Activated CD4-positive, alpha-beta T cell treated with anti-CD3 and anti-CD28 coated beads for 36 hours (primary cell): ENCODE measurements at regions of chr2 and their contacts with region 1.

Region 1: DNA sequence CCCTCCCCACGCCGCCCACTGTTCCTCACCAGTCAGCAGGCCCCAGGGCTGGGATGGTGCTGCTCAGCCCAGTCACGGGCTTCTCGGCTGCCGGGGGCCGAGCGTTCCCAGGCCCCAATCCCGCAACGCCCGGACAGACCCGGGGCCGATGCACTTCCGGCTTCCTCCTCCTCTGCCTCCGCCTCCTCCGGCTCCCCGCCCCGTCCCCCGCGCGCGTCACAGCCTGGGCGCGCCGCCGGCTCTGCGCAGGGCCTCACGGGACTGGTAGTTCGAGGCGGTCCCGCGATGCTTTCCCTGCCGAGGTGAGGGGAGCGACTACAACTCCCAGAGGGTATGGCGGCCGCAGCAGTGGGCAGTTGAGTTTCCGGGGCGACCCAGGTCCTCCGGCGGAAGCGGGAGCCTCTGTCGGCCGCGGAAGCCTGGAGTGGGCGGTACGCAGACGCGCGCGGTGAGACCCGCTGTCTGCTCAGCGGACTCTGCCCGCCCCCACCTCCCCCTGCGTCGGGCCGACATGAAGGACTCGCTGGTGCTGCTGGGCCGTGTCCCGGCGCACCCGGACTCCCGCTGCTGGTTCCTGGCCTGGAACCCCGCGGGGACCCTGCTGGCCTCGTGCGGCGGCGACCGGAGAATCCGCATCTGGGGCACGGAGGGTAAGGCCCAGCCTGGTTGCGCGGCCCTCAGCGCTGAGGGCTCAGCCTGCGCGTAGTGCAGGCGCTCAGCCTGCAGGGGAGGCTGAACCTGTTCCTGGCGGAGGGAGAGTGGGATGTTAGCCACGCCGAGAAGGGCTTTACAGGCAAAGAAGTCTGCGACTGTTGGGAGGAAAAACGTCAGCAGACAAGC is at the starts of genes CIAO1 and TMEM127:
- DNase-seq: peak; percentile 99
- ATAC-seq: peak; percentile 94
- H3K4me3 Mint-ChIP-seq: peak within 1 kb of the TSS; percentile 99
- H3K27ac Mint-ChIP-seq: peak within 1 kb of the TSS; percentile 99
- H3K4me1 Mint-ChIP-seq: peaks cover 57% of the 10 kb centered on the region
- H3K27me3 Mint-ChIP-seq: no peaks in the 10 kb centered on the region
- total RNA-seq, gene CIAO1: 72.1 to 77.6 TPM
- total RNA-seq, gene TMEM127: 16.6 to 17.9 TPM

Region 2: GRCh38 chr2:96116879-96117697 is 149.0 kb before region 1 on chr2:
- CTCF ChIA-PET with region 1: no interaction called
- POLR2A ChIA-PET with region 1: no interaction called
- intact Hi-C with region 1: loop called (anchors 1 to 5 kb)
- DNase-seq: peak; percentile 80
- ATAC-seq: peak; percentile 87
- H3K4me3 Mint-ChIP-seq: peak overlapping the region; percentile 55
- H3K27ac Mint-ChIP-seq: no peak overlapping the region
- H3K4me1 Mint-ChIP-seq: peaks cover 10% of the 10 kb centered on the region
- H3K27me3 Mint-ChIP-seq: peaks cover 36% of the 10 kb centered on the region

Region 3: DNA sequence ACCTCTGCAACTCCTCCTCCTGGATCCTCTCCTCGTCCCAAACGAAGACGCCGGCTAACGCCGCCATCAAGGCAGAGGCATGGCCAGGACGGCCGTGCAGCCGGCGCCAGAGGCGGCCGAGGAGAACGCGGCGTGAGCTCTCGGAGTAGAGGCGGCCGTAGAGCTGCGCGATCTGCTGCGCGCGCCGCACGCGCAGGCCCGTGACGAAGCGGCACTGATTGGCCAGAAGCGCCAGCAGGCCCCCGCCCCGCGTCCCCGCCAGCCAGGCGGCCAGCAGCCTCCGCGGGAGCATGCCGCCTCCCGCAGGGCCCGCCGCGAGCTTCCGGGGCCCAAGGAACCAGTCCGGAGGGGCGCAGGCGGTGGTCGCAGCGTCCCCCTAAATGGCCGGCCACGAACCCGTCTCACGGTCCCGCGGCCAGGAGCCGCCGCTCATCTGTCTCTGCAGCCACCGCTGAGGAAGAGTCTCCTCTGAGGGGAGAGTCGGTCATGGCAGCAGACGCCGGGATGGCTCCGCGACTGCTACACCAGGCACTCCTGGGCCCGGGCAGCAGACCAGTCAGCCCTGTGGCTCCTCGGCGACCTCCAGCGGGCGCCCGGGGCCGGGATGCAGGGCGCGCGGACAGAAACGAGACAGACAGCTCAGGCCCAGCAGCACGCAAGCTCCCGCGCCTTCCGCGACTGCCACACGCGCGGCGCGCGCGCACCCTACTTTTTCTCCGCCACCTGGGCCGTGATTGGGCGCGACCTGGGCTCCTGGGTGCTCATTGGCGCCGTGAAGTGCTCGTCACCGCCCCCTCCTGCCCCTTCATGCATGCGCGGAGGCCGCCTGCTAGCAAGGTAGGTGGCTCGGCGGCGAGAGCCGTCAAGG is 57.7 kb before region 1 on chr2 and contains the start of gene STARD7:
- CTCF ChIA-PET with region 1: interaction called, 8 read pairs
- POLR2A ChIA-PET with region 1: interaction called, 3 read pairs
- intact Hi-C with region 1: loop called (anchors 1 kb)
- DNase-seq: peak; percentile 99
- ATAC-seq: peak; percentile 94
- H3K4me3 Mint-ChIP-seq: peak within 1 kb of the TSS; percentile 100
- H3K27ac Mint-ChIP-seq: peak within 1 kb of the TSS; percentile 96
- H3K4me1 Mint-ChIP-seq: peaks cover 45% of the 10 kb centered on the region
- H3K27me3 Mint-ChIP-seq: no peaks in the 10 kb centered on the region
- total RNA-seq, gene STARD7: 151 to 173 TPM

Region 4: GRCh38 chr2:96233880-96234316 is 32.2 kb before region 1 on chr2:
- CTCF ChIA-PET with region 1: no interaction called
- POLR2A ChIA-PET with region 1: no interaction called
- intact Hi-C with region 1: no loop called
- DNase-seq: no peak
- ATAC-seq: no peak
- H3K4me3 Mint-ChIP-seq: no peak overlapping the region
- H3K27ac Mint-ChIP-seq: no peak overlapping the region
- H3K4me1 Mint-ChIP-seq: no peaks in the 10 kb centered on the region
- H3K27me3 Mint-ChIP-seq: no peaks in the 10 kb centered on the region

Region 5: DNA sequence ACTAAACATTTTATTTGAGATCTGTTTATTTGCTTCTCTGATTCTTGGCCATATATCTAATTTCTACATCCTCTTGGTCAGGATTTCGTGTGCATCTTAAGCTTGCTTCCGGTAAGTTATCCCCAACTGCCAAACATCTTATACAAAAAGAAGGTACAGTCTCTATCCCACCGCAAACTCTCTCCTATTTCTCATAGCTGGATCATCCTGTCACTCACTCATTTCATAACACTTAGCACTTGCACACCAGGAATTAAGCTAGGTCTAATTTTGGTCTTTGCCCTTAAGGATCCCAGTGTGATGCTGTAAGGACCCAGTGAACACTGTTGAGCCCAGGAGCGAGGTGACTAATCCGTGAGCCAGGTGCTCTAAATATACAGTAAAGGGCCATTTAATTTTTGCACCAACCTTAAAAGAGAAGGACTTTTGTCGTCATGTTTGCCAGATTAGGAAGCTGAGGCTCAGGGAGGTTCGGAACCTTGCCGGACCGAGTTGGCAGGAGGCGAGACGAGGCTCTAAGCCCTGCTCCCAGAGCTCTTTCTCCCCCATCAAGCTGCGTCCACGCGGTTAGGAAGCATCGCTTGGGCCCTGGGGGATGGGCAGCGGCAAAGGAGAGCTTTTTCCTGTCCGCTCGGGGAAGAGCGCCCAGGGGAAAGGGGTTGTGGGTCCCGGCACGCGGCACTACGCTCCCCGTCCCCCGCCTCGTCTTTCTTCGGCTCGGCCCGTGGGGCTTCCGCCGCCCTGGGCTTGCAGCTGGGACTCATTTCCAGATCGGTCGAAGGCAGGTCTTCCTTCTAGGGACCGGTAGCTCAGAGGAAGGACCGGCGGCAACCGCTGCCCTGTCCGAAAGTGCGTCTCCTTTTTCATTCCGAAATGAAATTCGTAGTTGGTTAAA is 54.9 kb after region 1 on chr2:
- CTCF ChIA-PET with region 1: interaction called, 6 read pairs
- POLR2A ChIA-PET with region 1: no interaction called
- intact Hi-C with region 1: loop called (anchors 1 to 2 kb)
- DNase-seq: peak; percentile 54
- ATAC-seq: peak; percentile 10
- H3K4me3 Mint-ChIP-seq: peak overlapping the region; percentile 73
- H3K27ac Mint-ChIP-seq: peak overlapping the region; percentile 63
- H3K4me1 Mint-ChIP-seq: peaks cover 52% of the 10 kb centered on the region
- H3K27me3 Mint-ChIP-seq: peaks cover 10% of the 10 kb centered on the region

Region 6: GRCh38 chr2:96536445-96537065 is 270.5 kb after region 1 on chr2 and contains the start of gene ARID5A:
- CTCF ChIA-PET with region 1: no interaction called
- POLR2A ChIA-PET with region 1: interaction called, 7 read pairs
- intact Hi-C with region 1: loop called in 1 of 2 experiments (anchors 1 kb)
- DNase-seq: peak; percentile 97
- ATAC-seq: peak; percentile 66
- H3K4me3 Mint-ChIP-seq: peak within 1 kb of the TSS; percentile 97
- H3K27ac Mint-ChIP-seq: peak within 1 kb of the TSS; percentile 90
- H3K4me1 Mint-ChIP-seq: peaks cover 64% of the 10 kb centered on the region
- H3K27me3 Mint-ChIP-seq: no peaks in the 10 kb centered on the region
- total RNA-seq, gene ARID5A: 179 to 191 TPM

Region 7: DNA sequence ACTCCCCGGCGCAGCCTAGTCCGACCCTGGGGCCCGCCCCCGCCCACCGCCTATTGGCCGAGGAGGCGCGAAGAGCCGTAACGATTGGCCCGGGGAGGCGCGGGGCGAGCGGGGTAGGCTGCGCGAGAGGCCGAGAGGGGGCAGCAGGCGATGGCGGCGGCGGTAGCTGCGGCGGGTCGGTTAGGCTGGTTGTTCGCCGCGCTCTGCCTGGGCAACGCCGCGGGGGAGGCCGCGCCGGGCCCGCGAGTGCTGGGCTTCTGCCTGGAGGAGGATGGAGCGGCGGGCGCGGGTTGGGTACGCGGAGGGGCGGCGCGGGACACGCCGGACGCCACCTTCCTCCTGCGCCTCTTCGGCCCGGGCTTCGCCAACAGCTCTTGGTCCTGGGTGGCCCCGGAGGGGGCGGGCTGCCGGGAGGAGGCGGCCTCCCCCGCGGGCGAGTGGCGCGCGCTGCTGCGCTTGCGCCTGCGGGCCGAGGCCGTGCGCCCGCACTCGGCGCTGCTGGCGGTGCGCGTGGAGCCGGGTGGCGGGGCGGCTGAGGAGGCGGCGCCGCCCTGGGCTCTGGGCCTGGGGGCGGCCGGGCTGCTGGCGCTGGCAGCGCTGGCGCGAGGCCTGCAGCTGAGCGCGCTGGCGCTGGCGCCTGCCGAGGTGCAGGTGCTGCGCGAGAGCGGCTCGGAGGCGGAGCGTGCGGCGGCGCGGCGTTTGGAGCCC is 550.2 kb after region 1 on chr2 and contains the start of gene CNNM3:
- CTCF ChIA-PET with region 1: no interaction called
- POLR2A ChIA-PET with region 1: no interaction called
- intact Hi-C with region 1: loop called in 1 of 2 experiments (anchors 1 kb)
- DNase-seq: peak; percentile 97
- ATAC-seq: peak; percentile 93
- H3K4me3 Mint-ChIP-seq: peak within 1 kb of the TSS; percentile 81
- H3K27ac Mint-ChIP-seq: peak within 1 kb of the TSS; percentile 56
- H3K4me1 Mint-ChIP-seq: peaks cover 46% of the 10 kb centered on the region
- H3K27me3 Mint-ChIP-seq: no peaks in the 10 kb centered on the region
- total RNA-seq, gene CNNM3: 19.2 to 31.2 TPM